Pancreas (tissue), 10 donors: ENCODE measurements at regions of chr21 and their contacts with region 1.

Region 1: DNA sequence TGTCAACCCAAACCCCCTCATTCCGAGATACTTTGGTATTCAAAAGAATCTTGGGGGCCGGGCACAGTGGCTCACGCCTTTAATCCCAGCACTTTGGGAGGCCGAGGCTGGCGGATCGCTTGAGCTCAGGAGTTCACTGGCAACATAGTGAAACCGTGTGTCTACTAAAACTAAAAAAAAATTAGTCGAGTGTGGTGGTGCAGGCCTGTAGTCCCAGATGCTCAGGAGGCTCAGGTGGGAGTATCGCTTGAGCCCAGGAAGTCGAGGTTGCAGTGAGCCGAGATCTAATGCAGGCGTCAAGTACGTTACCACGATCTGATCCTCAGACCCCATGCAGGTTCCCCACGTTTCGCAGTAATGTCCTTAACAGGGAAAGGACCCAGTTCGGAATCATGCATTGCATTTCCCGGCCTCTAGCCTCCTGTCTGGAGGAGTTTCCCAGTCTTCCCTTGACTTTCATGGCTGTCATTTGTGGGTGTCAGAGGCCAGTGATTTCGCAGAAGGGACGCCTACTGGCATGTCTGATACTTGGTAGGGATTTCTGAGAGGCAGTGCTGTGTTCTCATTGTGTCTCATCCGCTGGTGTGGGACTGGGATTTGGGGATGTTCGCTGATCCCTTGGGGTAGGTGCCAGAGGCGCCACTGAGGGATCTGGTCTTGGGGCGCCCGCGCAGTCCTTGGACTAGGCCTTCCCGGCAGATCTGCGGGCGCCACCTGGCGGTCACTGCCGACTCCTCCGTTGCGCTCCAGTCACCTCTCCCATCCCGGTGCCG is 39.3 kb upstream of the HMGN1 start:
- DNase-seq: peak; percentile 81 to 100 (median 91)
- ATAC-seq: peak; percentile 67 to 88 (median 77)
- H3K4me3 ChIP-seq: peak overlapping the region; percentile 4 to 50 (median 22)
- H3K27ac ChIP-seq: peak overlapping the region in 2 of 4 donors; percentile 1 to 77
- H3K4me1 ChIP-seq: peaks cover 4 to 11% (median 8%) of the 10 kb centered on the region in 3 donors
- H3K27me3 ChIP-seq: no peaks in the 10 kb centered on the region
- CTCF ChIP-seq: peak; percentile 78 to 93 (median 89)

Region 2: GRCh38 chr21:39313571-39314142 is 74.6 kb before region 1 on chr21 and contains the start of gene BRWD1:
- intact Hi-C with region 1: loop called in 1 of 3 experiments (anchors 10 kb)
- DNase-seq: peak; percentile 72 to 92 (median 82)
- ATAC-seq: peak; percentile 75 to 86 (median 85)
- H3K4me3 ChIP-seq: peak within 1 kb of the TSS; percentile 66 to 99 (median 78)
- H3K27ac ChIP-seq: peak within 1 kb of the TSS; percentile 84 to 97 (median 95)
- H3K4me1 ChIP-seq: peaks cover 0 to 19% (median 8%) of the 10 kb centered on the region in 3 donors
- H3K27me3 ChIP-seq: no peaks in the 10 kb centered on the region
- CTCF ChIP-seq: peak in 1 of 4 donors; percentile 23
- total RNA-seq, gene BRWD1: 19.6 to 31.7 (median 22.8) TPM

Region 3: GRCh38 chr21:39489380-39489924 is 101.2 kb after region 1 on chr21:
- intact Hi-C with region 1: no loop called
- DNase-seq: no peak
- ATAC-seq: no peak
- H3K4me3 ChIP-seq: no peak overlapping the region
- H3K27ac ChIP-seq: no peak overlapping the region
- H3K4me1 ChIP-seq: no peaks in the 10 kb centered on the region
- H3K27me3 ChIP-seq: no peaks in the 10 kb centered on the region
- CTCF ChIP-seq: no peak